Mammary epithelial cell (primary cell): ENCODE measurements at regions of chr11 and their contacts with region 1.

Region 1: DNA sequence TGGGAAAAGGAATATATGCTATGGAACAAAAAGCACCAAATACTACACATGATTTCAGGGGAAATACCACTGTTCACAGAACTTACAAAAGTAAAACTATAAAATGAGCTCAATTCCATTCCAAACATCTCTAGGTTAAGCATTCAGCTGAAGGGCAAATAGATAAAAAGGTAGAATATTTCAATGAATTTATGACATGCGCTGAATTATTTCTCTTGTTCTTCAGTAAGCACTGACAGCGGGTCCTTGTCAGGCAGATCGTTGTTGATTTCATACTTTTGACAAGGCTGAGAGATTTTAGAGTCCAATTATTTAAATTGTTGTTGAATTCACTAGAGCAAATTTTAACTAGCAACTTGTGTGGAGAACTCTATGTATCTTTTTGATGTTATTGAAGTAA is 449.6 kb downstream of the GUCY1A2 start:
- DNase-seq: no peak
- H3K4me3 ChIP-seq: no peak overlapping the region
- H3K27ac ChIP-seq: no peak overlapping the region
- H3K4me1 ChIP-seq: no peaks in the 10 kb centered on the region
- H3K27me3 ChIP-seq: no peaks in the 10 kb centered on the region
- CTCF ChIP-seq: no peak

Region 2: DNA sequence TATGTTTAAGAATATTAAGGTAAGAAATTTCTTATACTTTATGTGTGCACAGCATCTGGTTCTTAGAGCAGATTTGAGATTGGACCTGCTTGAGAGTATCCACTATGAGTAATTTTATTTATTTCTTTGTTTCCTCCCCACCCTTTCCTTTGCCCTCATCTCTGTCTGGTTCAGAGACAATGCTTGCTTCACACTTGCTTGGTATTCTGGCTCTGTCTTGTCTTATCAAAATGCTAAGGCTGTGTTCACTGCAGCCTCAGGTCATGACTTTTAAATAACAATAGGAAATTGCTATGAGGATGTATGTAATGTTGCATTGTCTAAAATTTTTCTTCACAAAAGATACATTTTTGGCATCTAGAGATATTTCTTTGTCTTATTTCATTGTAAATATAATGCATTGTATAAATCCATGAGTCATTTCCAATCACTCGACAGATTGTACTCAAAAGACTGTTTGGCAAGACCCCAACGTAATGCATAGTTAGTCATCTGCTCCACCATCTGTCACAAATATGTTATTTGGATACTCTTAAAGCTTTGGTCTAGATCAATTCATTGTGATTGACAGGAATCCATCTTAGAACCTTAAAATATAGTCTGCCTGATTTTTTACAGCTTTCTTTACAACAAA is 95.4 kb before region 1 on chr11:
- CTCF ChIA-PET with region 1: no interaction called
- dilution Hi-C with region 1: loop called (anchors 5 kb)
- in situ Hi-C with region 1: no loop called
- intact Hi-C with region 1: no loop called
- DNase-seq: no peak
- H3K4me3 ChIP-seq: no peak overlapping the region
- H3K27ac ChIP-seq: no peak overlapping the region
- H3K4me1 ChIP-seq: peaks cover 14% of the 10 kb centered on the region
- H3K27me3 ChIP-seq: no peaks in the 10 kb centered on the region
- CTCF ChIP-seq: no peak

Region 3: GRCh38 chr11:106644824-106645223 is 76.2 kb after region 1 on chr11:
- CTCF ChIA-PET with region 1: no interaction called
- dilution Hi-C with region 1: no loop called
- in situ Hi-C with region 1: no loop called
- intact Hi-C with region 1: no loop called
- DNase-seq: peak; percentile 40
- H3K4me3 ChIP-seq: no peak overlapping the region
- H3K27ac ChIP-seq: no peak overlapping the region
- H3K4me1 ChIP-seq: no peaks in the 10 kb centered on the region
- H3K27me3 ChIP-seq: no peaks in the 10 kb centered on the region
- CTCF ChIP-seq: no peak

Region 4: DNA sequence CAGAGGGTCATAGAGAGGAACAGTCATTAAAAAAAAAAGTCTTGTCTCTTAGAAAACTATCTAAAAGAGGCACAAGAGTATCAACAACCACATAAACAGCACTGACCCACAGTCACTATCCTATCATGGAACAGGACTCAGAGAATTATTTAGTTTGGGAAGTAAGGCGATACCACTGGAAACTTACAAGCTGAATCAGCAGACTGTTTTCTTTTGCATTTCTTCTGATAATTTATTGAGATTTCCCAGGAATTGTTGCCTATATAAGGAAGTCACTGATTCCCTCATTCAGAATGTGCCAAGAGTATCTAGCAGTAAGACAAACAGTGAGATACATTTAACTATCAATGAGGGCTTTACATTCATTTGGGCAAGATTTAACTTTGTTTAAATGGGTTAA is 145.6 kb after region 1 on chr11:
- CTCF ChIA-PET with region 1: no interaction called
- dilution Hi-C with region 1: no loop called
- in situ Hi-C with region 1: no loop called
- intact Hi-C with region 1: no loop called
- DNase-seq: no peak
- H3K4me3 ChIP-seq: no peak overlapping the region
- H3K27ac ChIP-seq: no peak overlapping the region
- H3K4me1 ChIP-seq: no peaks in the 10 kb centered on the region
- H3K27me3 ChIP-seq: peaks cover 6% of the 10 kb centered on the region
- CTCF ChIP-seq: no peak